ENCODE measurements at regions of chr9 and their contacts with region 1.

Region 1: GRCh38 chr9:78014776-78015175 is 16.8 kb downstream of the GNAQ start:
- DNase-seq: no peak
- H3K4me3 ChIP-seq: no peak overlapping the region
- H3K27ac ChIP-seq: no peak overlapping the region
- H3K27me3 ChIP-seq: no peaks in the 10 kb centered on the region
- CTCF ChIP-seq: no peak

Region 2: DNA sequence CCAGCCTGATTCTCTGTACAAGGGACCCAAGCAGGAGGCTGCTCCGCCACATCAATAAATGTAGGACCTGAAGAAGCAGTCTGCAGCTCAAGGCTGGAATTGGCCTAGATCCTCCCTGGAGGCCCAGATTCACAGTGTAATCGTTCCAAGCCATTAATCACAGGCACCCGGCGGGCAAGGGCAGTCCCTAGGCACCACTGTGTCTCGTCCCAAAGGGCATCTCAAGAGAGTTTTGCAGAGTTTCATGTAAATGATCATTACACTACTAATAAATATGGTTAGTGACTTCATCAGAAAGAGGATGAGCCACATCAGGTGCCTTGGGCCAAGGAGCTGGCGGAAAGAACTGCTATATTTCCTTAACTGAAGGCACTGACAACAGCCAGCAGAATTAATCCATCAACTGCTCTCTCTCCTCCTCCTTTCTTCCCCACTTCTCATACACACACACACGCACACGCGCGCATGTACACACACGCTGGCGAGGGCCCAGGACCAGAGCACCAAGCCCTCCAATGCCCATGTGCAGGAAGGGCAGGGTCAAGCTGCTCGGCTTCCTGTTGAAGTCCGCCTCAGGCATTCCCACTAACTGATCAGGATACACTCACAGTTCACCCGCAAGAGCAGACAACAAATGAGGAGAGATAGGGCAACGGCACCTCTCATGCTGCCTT is 17.0 kb before region 1 on chr9:
- intact Hi-C with region 1: loop called in 1 of 2 experiments (anchors 2 kb)
- DNase-seq: no peak
- H3K4me3 ChIP-seq: no peak overlapping the region
- H3K27ac ChIP-seq: peak overlapping the region in 4 of 59 donors; percentile 4 to 45 (median 8)
- H3K27me3 ChIP-seq: no peaks in the 10 kb centered on the region
- CTCF ChIP-seq: no peak